ENCODE measurements at regions of chr18 and their contacts with region 1.

Region 1: DNA sequence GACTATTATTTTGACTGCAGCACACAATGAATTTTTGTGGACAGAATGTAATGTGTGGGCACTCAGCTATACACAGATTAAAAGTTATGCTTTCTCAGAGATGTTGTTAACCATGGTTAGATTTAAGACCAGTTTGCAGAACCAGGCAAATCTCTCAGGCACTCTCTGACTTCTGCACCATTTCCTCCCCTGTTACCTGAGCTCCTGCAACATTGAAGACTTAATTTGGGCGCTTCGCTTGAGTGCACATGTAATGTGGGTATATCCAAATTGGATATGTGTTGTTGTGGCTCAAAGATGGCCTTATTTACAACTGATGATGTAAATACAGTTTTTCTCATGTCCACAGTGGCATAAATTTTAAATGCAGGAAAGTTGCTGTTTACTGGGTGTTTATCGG is 469.4 kb downstream of the PTPRM start:
- DNase-seq: no peak
- H3K4me3 ChIP-seq: no peak overlapping the region
- H3K27ac ChIP-seq: no peak overlapping the region
- H3K4me1 ChIP-seq: peaks cover 21% of the 10 kb centered on the region
- H3K27me3 ChIP-seq: no peaks in the 10 kb centered on the region
- CTCF ChIP-seq: no peak

Region 2: DNA sequence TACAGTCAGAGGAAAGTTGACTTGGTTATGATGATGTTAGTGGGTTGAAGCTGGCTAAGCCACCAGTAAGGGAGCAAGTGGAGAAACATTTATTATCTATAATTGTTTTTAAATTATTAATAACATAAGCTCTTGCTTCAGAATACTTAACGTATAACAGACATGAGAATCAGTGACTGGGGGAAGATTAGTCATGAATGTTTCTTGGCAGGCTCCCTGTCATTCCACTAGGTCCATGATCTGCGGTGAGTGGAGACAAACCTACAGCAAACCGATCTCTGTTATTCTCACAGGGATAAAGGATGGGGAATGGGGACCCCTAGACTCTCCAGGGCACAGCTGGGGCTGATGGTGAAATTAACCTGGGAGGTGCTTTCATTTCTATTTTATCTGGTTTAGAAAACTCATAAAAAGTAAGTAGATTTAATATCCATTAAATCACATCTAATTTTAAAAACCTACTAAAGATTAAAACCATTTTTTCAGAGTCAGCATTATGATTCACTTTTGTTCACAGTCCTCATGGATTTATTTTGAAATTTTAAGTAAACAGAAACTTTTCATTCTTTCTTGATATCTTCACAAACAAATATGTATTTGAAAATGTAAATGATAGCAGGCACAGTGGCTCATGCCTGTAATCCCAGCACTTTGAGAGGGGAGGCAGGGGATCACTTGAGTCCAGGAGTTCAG is 49.1 kb before region 1 on chr18:
- CTCF ChIA-PET with region 1: no interaction called
- dilution Hi-C with region 1: no loop called
- in situ Hi-C with region 1: no loop called
- intact Hi-C with region 1: loop called (anchors 1 kb)
- DNase-seq: peak; percentile 12
- H3K4me3 ChIP-seq: no peak overlapping the region
- H3K27ac ChIP-seq: no peak overlapping the region
- H3K4me1 ChIP-seq: no peaks in the 10 kb centered on the region
- H3K27me3 ChIP-seq: no peaks in the 10 kb centered on the region
- CTCF ChIP-seq: no peak

Region 3: GRCh38 chr18:8196238-8196637 is 159.7 kb after region 1 on chr18:
- CTCF ChIA-PET with region 1: no interaction called
- dilution Hi-C with region 1: no loop called
- in situ Hi-C with region 1: no loop called
- intact Hi-C with region 1: no loop called
- DNase-seq: no peak
- H3K4me3 ChIP-seq: no peak overlapping the region
- H3K27ac ChIP-seq: no peak overlapping the region
- H3K4me1 ChIP-seq: no peaks in the 10 kb centered on the region
- H3K27me3 ChIP-seq: no peaks in the 10 kb centered on the region
- CTCF ChIP-seq: no peak

Region 4: GRCh38 chr18:8324343-8325065 is 288.0 kb after region 1 on chr18:
- CTCF ChIA-PET with region 1: no interaction called
- dilution Hi-C with region 1: no loop called
- in situ Hi-C with region 1: no loop called
- intact Hi-C with region 1: no loop called
- DNase-seq: no peak
- H3K4me3 ChIP-seq: no peak overlapping the region
- H3K27ac ChIP-seq: no peak overlapping the region
- H3K4me1 ChIP-seq: no peaks in the 10 kb centered on the region
- H3K27me3 ChIP-seq: no peaks in the 10 kb centered on the region
- CTCF ChIP-seq: peak in 1 of 2 donors; percentile 6

Region 5: GRCh38 chr18:8426401-8426800 is 389.9 kb after region 1 on chr18:
- CTCF ChIA-PET with region 1: no interaction called
- dilution Hi-C with region 1: no loop called
- in situ Hi-C with region 1: no loop called
- intact Hi-C with region 1: no loop called
- DNase-seq: no peak
- H3K4me3 ChIP-seq: no peak overlapping the region
- H3K27ac ChIP-seq: no peak overlapping the region
- H3K4me1 ChIP-seq: peaks cover 27% of the 10 kb centered on the region
- H3K27me3 ChIP-seq: no peaks in the 10 kb centered on the region
- CTCF ChIP-seq: peak in 1 of 2 donors; percentile 20